PC-9 (cell line): ENCODE measurements at regions of chr10 and their contacts with region 1.

Region 1: DNA sequence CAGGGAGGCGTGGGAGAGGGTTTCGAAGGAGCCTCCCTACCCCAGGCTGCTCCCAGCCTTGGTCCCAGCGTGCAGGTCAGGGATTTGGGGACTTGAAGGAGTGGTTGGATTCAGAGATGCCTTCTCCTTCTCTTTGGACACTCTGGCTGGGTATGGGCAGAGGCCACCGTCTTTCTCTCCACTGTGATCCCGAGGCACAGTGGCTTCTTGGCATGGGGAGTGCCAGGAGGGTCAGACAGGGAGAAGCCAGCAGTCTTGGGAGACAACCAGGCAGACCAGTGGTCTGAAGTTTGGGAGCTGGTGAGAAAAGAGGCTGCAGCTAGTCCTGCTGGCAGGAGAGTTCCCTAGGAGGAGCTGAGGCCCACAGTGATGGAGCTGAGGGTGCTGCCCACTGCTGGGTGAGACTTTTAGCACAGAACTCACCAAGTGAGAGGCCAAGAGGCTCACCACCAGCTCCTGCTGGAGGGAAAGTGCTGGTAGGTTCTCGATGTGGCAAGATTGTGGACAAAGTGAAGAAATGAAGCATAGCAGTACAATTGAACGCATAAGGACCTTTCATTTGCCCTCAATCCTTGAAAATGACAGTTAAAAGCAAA is 35.2 kb upstream of the WDFY4 start:
- DNase-seq: no peak
- H3K4me3 ChIP-seq: no peak overlapping the region
- H3K27ac ChIP-seq: no peak overlapping the region
- H3K4me1 ChIP-seq: no peaks in the 10 kb centered on the region
- H3K27me3 ChIP-seq: no peaks in the 10 kb centered on the region
- CTCF ChIP-seq: no peak

Region 2: GRCh38 chr10:48573045-48573444 is 76.4 kb before region 1 on chr10:
- CTCF ChIA-PET with region 1: interaction called, 11 read pairs
- POLR2A ChIA-PET with region 1: no interaction called
- intact Hi-C with region 1: no loop called
- DNase-seq: no peak
- H3K4me3 ChIP-seq: no peak overlapping the region
- H3K27ac ChIP-seq: no peak overlapping the region
- H3K4me1 ChIP-seq: no peaks in the 10 kb centered on the region
- H3K27me3 ChIP-seq: no peaks in the 10 kb centered on the region
- CTCF ChIP-seq: no peak